AG04449 (cell line): ENCODE measurements at regions of chr1 and their contacts with region 1.

Region 1: GRCh38 chr1:23098463-23099170 is 70.0 kb downstream of the LUZP1 start:
- DNase-seq: no peak
- H3K4me3 ChIP-seq: no peak overlapping the region
- CTCF ChIP-seq: peak; percentile 83

Region 2: GRCh38 chr1:22916471-22916820 is 182.2 kb before region 1 on chr1:
- CTCF ChIA-PET with region 1: no interaction called
- POLR2A ChIA-PET with region 1: no interaction called
- DNase-seq: no peak
- H3K4me3 ChIP-seq: no peak overlapping the region
- CTCF ChIP-seq: no peak

Region 3: DNA sequence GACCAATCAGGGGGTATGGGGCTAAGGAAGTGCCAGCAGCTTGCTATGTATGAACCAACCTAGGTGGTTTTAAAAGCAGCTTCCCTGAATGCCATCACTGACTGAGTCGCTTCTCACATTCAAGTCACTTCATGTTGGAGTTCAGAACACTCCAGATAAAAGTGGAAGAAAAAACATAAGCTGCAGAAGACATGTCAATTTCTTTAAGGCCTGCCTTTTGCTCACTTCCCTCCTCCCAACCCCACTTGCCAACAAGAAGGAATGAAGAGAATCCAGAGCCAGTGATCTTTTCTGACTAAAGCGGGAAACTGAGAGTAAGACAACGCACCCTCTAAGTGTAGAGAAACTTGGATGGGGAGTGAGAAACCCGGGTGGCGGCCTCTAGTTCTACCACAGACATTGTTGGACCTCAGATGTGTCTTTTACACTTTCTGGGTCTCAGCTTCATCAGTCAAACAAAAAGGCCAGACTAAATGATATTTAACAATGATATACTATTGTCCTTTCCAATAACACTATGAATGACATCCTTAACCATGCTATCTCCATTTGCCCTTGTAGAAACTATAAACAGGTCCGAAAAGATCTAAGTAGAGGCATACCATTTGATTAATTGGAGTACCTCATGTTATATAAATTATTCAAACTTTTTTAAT is 15.9 kb after region 1 on chr1:
- CTCF ChIA-PET with region 1: interaction called, 109 read pairs
- POLR2A ChIA-PET with region 1: no interaction called
- DNase-seq: no peak
- H3K4me3 ChIP-seq: no peak overlapping the region
- CTCF ChIP-seq: no peak

Region 4: DNA sequence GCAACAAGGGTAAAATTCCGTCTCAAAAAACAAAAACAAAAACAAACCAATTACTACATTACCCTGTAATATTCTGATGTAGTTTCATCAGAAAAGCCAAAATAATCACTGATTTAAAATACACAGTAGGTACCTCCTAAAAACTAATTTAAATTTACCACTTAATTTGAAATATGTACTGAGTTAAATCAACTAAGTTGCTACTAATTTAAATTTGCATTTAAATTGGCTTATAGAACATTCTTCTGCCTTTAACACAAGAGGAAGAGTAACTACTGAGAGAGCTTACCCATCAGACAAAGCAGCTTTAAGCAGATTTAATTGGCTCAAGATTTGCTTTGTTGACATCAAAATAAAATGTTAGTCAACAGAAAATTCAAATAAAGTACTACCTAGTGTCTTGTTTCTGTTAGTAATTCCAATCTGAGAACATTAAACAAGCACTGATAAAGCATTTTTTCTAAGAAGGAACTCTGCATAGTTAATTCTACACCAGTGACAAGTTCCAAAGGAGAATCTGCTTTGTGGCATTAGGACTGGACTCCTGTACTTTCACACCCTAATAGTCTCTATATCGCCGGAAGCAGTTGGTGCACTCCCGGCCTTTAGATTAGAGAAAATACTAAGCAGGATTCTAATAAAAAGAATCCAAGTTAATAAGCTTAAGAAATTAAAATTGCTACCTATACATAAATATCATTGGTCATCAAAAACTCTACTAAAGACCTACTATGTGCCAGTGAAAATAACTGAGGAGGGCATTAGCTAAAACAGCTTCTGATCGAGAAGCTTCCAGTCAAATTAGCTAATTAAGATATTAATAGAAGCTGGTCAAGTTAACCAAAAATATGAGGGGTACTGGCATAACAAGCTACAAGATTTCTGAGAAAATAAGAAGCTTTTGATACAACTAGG is 61.6 kb after region 1 on chr1:
- CTCF ChIA-PET with region 1: interaction called, 174 read pairs
- POLR2A ChIA-PET with region 1: no interaction called
- DNase-seq: no peak
- H3K4me3 ChIP-seq: no peak overlapping the region
- CTCF ChIP-seq: no peak

Region 5: GRCh38 chr1:23196639-23197328 is 98.2 kb after region 1 on chr1:
- CTCF ChIA-PET with region 1: interaction called, 29 read pairs
- POLR2A ChIA-PET with region 1: interaction called, 4 read pairs
- DNase-seq: peak; percentile 96
- H3K4me3 ChIP-seq: no peak overlapping the region
- CTCF ChIP-seq: no peak

Region 6: GRCh38 chr1:23227806-23228205 is 129.2 kb after region 1 on chr1:
- CTCF ChIA-PET with region 1: no interaction called
- POLR2A ChIA-PET with region 1: no interaction called
- DNase-seq: no peak
- H3K4me3 ChIP-seq: no peak overlapping the region
- CTCF ChIP-seq: no peak